ENCODE measurements at regions of chr2 and their contacts with region 1.

Region 1: DNA sequence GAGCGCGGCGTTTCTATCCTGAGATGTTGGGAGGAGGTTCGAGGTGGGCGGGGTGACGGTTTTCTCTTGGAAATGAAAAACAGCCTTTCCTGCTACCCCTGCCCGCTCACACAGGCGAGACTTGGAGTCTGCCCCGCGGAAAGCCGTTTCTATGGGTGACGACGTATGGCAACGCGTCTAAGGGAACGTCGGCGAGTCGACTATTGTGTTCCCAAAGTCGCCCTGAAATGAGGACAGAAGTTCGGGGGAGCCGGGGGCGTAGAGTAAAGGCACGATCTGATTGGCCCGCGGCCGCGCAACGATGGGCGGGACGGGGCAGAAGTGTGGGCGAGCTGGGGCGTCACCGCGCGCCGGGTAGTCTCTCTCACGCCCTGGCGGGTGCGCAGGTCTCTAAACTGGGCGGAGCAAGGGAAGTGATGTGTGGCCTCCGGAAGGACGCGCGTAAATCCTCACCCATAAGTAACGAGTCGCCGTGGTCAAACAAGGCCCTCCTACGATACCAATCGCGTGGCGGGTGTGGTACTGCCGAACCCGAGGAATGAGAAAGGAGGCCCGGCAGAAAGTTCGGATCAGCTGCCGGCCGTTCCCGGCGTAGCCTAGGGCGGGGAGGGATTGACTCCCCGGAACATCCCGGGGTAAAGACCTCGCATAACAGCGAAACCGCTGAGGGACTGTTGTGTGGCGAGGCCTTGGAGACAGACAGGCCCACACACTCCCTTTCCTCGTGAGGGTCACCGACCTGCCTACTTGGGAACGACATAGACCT is 89.6 kb downstream of the FAM161A start:
- DNase-seq: peak; percentile 99
- ATAC-seq: peak; percentile 97
- H3K4me3 Mint-ChIP-seq: peak overlapping the region; percentile 93
- H3K27ac Mint-ChIP-seq: peak overlapping the region; percentile 95
- H3K4me1 Mint-ChIP-seq: peaks cover 15% of the 10 kb centered on the region
- H3K27me3 Mint-ChIP-seq: no peaks in the 10 kb centered on the region

Region 2: GRCh38 chr2:60881047-60881932 is 882.9 kb before region 1 on chr2 and contains the start of gene REL:
- CTCF ChIA-PET with region 1: no interaction called
- POLR2A ChIA-PET with region 1: no interaction called
- intact Hi-C with region 1: loop called in 1 of 2 experiments (anchors 5 kb)
- DNase-seq: peak; percentile 95
- ATAC-seq: peak; percentile 84
- H3K4me3 Mint-ChIP-seq: peak within 1 kb of the TSS; percentile 91
- H3K27ac Mint-ChIP-seq: peak within 1 kb of the TSS; percentile 98
- H3K4me1 Mint-ChIP-seq: peaks cover 25% of the 10 kb centered on the region
- H3K27me3 Mint-ChIP-seq: no peaks in the 10 kb centered on the region
- total RNA-seq, gene REL: 42.7 to 55.9 TPM

Region 3: DNA sequence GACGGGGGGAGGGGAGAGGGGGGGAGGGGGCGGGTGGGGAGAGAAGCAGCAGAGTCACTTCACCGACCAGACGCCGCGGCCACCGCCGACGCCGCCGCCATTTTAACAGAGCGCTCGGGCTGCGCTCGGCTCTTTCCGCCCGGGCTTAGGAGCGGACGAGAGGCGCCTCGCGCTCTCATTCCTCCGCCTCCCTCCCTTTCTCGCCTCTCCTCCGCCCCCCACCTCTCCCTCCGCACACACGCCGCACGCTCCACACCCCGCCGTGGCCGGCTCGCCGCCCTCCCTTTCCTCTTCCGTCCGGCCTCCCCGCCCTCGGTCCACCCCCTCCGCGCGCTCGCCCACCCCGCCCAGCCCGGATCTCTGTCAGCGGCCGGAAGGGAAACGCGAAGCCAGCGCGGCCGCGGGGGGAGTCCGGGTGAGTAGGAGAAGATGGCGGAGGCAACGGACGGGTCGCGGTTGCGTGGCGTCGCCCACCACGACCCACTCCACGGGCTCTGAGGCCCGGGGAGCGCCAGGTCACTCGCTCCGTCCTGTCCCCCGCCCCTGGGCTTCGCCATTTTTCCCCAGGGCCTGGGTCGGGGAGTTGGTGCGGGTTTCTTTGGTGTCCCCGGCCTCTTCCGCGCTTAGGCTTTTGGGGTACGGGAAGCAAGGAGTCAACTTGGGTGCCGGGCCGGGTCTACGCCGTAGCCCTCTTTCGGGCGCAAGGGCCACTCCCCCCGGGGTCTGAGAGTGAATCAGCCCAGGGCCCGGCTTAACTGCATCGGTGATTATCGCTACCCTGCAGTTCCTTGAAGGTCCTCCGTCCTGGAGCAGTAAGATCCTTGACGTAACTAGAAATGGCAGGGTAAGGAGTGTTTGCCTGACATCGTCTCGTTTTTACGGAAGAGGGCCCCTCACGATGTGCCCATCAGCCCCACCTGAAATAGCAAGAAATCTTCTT is 293.0 kb before region 1 on chr2 and contains the start of gene USP34:
- CTCF ChIA-PET with region 1: no interaction called
- POLR2A ChIA-PET with region 1: no interaction called
- intact Hi-C with region 1: loop called (anchors 1 kb)
- DNase-seq: peak; percentile 97
- ATAC-seq: peak; percentile 91
- H3K4me3 Mint-ChIP-seq: peak within 1 kb of the TSS; percentile 83
- H3K27ac Mint-ChIP-seq: peak within 1 kb of the TSS; percentile 94
- H3K4me1 Mint-ChIP-seq: peaks cover 29% of the 10 kb centered on the region
- H3K27me3 Mint-ChIP-seq: no peaks in the 10 kb centered on the region
- total RNA-seq, gene USP34: 63.7 to 67.6 TPM

Region 4: DNA sequence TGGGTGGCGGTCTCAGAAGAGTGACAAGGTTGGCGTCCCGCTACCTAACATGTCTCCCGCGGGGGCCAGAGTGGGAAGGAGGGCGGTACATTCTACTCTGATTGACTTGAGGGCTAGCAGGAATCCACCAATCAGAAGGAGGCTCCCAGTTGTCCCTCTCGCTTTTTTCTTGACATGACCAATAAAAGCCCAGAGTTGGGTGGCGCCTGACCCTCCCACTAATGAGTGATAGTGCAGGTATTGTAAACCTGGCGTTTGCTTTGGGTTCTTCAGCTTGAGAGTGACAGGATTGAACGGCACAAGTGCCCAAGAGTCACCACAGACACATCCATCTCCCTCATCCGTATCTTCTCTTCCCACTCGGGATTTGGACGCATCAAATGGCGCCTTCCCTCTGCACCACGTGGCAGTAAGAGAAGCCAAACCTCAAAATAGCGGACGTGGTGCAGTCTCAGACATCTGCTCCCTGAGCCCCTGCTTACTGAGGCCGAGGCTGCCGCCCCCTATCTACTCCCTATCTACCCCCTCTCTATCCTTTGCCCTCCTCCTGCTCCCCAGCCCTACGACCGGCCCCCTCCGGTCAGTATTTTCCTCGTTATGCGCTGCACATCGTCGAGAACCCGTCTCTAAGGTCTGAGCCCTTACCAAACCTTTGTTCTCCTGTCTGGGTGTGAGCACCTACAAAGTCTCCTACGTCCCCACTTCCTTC is 90.4 kb after region 1 on chr2:
- CTCF ChIA-PET with region 1: no interaction called
- POLR2A ChIA-PET with region 1: interaction called, 3 read pairs
- intact Hi-C with region 1: loop called (anchors 1 to 2 kb)
- DNase-seq: peak; percentile 93
- ATAC-seq: peak; percentile 94
- H3K4me3 Mint-ChIP-seq: peak overlapping the region; percentile 99
- H3K27ac Mint-ChIP-seq: peak overlapping the region; percentile 94
- H3K4me1 Mint-ChIP-seq: peaks cover 20% of the 10 kb centered on the region
- H3K27me3 Mint-ChIP-seq: no peaks in the 10 kb centered on the region

Region 5: DNA sequence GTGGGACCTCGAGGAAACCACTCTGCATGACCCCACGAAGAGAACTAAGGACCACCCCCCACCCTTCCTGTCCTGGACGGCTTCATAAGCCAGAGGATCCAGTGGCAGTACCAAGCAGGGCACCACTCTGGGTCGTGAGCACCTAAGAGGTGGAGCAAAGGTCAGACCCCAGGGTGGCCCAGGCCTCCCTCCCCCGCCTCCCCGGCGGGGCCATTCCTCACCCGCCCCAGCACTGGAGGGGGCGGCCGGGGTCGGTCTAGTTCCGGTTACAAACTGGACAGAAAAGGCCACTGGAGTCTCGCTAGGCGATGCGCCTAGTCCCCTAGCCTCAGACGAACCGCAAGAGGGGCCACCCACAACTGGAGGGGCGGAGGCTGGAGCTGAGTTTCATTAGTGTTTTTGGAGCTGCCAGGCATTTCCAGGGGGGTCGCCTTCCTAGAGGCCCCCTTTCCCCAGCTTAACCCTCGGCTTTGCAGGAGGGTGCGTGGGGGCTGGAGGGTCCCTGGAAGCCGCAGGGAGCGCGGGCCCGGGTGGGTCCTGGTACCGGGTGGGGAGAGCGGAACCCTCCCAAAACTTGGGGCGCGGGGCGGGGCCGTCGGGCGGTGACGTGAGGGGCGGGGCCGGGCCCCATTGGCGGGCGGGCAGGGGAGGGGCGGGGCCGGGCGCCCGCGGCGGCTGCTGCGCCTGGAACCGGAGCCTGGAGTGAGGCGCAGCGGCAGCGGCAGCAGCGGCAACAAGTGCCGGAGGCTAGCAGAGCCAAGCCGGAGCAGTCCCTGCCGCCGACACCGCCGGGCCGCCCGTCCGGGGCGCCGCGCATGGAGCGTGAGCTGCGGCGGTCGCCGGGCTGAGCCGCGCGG is 431.4 kb after region 1 on chr2 and contains the start of gene B3GNT2:
- CTCF ChIA-PET with region 1: no interaction called
- POLR2A ChIA-PET with region 1: no interaction called
- intact Hi-C with region 1: loop called (anchors 1 to 10 kb)
- DNase-seq: peak; percentile 92
- ATAC-seq: peak; percentile 62
- H3K4me3 Mint-ChIP-seq: peak within 1 kb of the TSS; percentile 92
- H3K27ac Mint-ChIP-seq: peak within 1 kb of the TSS; percentile 92
- H3K4me1 Mint-ChIP-seq: peaks cover 28% of the 10 kb centered on the region
- H3K27me3 Mint-ChIP-seq: no peaks in the 10 kb centered on the region
- total RNA-seq, gene B3GNT2: 28.6 to 31.7 TPM

Region 6: DNA sequence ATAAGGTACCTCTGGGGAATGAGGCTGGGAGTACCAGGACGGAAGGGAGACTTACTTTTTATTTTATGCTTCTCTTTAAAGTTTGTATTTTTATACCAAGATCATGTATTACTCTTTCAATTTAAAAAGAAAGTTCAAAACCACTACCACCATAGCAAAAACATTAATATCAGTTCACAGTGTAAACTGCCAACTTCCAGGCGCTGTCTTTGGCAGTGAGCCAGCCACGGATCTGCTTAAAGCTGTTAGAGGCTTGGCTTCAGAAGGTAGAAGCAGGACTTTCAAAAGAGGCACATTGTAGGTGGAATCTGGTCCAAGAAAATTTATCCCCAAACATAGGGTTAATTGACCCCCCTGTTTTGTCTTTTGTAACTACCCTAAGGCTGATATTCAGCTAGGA is 506.5 kb after region 1 on chr2:
- CTCF ChIA-PET with region 1: no interaction called
- POLR2A ChIA-PET with region 1: no interaction called
- intact Hi-C with region 1: no loop called
- DNase-seq: no peak
- ATAC-seq: no peak
- H3K4me3 Mint-ChIP-seq: no peak overlapping the region
- H3K27ac Mint-ChIP-seq: no peak overlapping the region
- H3K4me1 Mint-ChIP-seq: peaks cover 2% of the 10 kb centered on the region
- H3K27me3 Mint-ChIP-seq: no peaks in the 10 kb centered on the region

Region 7: GRCh38 chr2:62705007-62705829 is 941.0 kb after region 1 on chr2 and contains the start of gene EHBP1:
- CTCF ChIA-PET with region 1: no interaction called
- POLR2A ChIA-PET with region 1: no interaction called
- intact Hi-C with region 1: loop called in 1 of 2 experiments (anchors 1 kb)
- DNase-seq: peak; percentile 99
- ATAC-seq: peak; percentile 95
- H3K4me3 Mint-ChIP-seq: peak within 1 kb of the TSS; percentile 79
- H3K27ac Mint-ChIP-seq: peak within 1 kb of the TSS; percentile 83
- H3K4me1 Mint-ChIP-seq: peaks cover 31% of the 10 kb centered on the region
- H3K27me3 Mint-ChIP-seq: no peaks in the 10 kb centered on the region
- total RNA-seq, gene EHBP1: 27.3 to 28.5 TPM